ENCODE measurements at regions of chr9 and their contacts with region 1.

Region 1: GRCh38 chr9:111158363-111158762 is 120.1 kb upstream of the LPAR1 start:
- DNase-seq: no peak
- H3K27ac ChIP-seq: no peak overlapping the region
- CTCF ChIP-seq: no peak

Region 2: GRCh38 chr9:110427497-110428104 is 730.8 kb before region 1 on chr9:
- CTCF ChIA-PET with region 1: interaction called, 11 read pairs
- POLR2A ChIA-PET with region 1: no interaction called
- DNase-seq: peak; percentile 43
- H3K27ac ChIP-seq: no peak overlapping the region
- CTCF ChIP-seq: peak; percentile 76

Measured in RWPE1 (cell line).